HepG2 (cell line): ENCODE measurements at regions of chr3 and their contacts with region 1.

Region 1: DNA sequence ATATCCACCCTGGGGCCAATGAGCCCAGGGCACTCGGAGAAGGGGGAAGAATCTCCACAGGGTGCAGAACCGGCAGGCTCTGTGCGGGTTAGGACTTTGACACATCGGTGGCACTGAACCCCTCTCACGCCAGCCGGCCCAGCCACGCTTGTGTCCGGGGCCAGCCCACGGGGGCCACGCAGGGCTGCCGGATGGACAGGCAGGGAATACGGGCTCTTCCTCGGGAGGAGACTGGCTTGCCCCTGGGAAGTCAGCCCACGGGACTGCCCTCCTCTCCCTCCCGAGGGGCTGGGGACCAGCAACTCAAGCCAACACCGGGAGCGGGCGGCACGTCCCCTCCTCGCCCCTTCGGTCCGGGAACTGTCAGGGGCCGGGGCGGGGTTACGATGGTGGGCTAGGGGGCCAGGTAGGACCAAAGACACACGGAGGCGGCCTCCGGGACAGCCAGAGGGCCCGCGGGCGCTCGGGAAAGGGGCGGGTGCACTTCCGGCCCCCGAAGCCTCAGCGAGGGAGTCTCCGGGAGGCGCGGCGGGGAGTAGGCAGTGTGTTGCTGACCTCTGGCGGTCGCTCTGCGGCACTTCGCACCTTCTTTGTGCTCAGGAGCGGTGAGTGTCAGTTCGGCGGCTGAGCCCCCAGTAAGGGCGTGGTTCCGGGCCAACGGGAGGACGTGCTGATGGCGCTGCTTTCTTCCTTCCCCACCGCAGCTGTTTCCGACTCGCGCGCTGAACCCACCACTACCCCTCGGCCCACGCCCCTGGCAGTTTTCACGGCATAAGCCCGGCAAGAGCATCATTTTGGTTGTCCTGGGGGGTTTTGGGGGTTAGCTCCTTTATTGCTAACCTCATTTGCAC is 5.1 kb upstream of the CYP8B1 start:
- DNase-seq: peak; percentile 66
- ATAC-seq: peak; percentile 96
- H3K4me3 ChIP-seq: peak overlapping the region in 2 of 3 experiments; percentile 34 to 56; a peak in 3 of 6 replicates
- H3K27ac ChIP-seq: no peak overlapping the region
- H3K4me1 ChIP-seq: peaks cover 52% of the 10 kb centered on the region
- H3K27me3 ChIP-seq: no peaks in the 10 kb centered on the region; a peak in 1 of 5 replicates
- CTCF ChIP-seq: peak; percentile 99
- EP300 ChIP-seq: no peak
- POLR2A ChIP-seq: no peak
- RAD21 ChIP-seq: peak; percentile 99

Region 2: DNA sequence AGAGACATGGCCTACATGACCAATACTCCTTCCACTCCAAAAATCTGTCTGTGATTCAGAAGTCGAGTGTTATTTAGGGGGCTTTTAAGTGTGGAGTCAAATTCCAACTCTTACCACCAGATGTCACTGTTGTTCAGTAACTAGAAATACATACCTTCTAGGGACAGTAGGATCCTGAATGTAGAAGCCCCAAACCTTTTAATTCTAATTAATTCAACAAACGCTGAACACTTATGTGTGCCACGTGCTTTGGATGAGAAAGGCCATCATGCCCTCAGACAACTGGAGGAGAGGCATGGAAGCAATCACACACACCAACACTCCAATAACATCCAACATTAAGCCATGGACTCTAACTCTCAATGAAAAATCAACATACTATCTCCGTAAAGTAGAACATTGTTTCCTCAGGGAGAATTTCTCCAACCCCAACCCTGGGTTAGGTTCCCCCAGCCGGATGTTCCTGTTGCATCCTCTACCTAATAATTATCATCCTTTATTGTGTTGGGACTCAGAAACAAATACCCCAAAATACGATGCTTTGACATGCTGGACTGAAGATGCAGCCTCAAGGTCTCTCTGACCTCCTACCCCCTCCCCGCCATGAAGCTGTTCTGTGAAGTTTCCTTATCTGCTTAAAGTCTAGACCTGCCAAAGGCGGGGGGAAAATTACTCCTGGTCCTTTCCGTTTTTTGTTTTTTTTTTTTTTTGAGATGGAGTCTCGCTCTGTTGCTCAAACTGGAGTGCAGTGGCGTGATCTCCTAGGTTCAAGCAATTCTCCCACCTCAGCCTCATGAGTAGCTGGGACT is 99.7 kb before region 1 on chr3:
- CTCF ChIA-PET with region 1: interaction called, 11 read pairs
- POLR2A ChIA-PET with region 1: interaction called, 5 read pairs
- in situ Hi-C with region 1: loop called (anchors 5 kb)
- intact Hi-C with region 1: loop called (anchors 1 kb)
- DNase-seq: peak; percentile 68
- ATAC-seq: peak; percentile 84
- H3K4me3 ChIP-seq: no peak overlapping the region
- H3K27ac ChIP-seq: no peak overlapping the region
- H3K4me1 ChIP-seq: peaks cover 16% of the 10 kb centered on the region
- H3K27me3 ChIP-seq: no peaks in the 10 kb centered on the region
- CTCF ChIP-seq: peak; percentile 78
- EP300 ChIP-seq: no peak
- POLR2A ChIP-seq: no peak
- RAD21 ChIP-seq: peak; percentile 78

Region 3: DNA sequence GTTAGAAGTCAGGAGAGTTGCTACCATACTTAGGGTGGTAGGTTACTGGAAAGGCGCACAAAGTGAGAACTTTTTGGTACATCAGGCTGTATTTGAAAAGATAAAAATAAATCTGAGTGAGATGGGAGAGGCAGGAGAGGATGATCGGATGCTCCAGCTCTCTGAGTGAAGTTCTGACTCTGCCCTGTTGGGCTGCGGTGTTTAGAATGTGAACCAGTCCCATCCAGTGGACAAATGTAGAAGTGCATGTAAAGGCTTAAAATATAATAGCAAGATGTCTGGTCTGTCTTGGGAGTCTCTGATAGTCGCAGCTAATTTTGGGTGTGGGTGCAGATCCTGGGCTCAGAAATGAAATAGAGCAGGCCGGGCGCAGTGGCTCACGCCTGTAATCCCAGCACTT is 41.2 kb before region 1 on chr3:
- CTCF ChIA-PET with region 1: interaction called, 9 read pairs
- POLR2A ChIA-PET with region 1: interaction called, 4 read pairs
- in situ Hi-C with region 1: loop called (anchors 5 kb)
- intact Hi-C with region 1: loop called (anchors 2 kb)
- DNase-seq: peak; percentile 73
- ATAC-seq: peak; percentile 98
- H3K4me3 ChIP-seq: no peak overlapping the region
- H3K27ac ChIP-seq: no peak overlapping the region
- H3K4me1 ChIP-seq: peaks cover 41% of the 10 kb centered on the region
- H3K27me3 ChIP-seq: no peaks in the 10 kb centered on the region
- CTCF ChIP-seq: peak; percentile 70
- EP300 ChIP-seq: no peak
- POLR2A ChIP-seq: no peak
- RAD21 ChIP-seq: peak; percentile 77

Region 4: GRCh38 chr3:42852441-42852840 is 28.4 kb before region 1 on chr3:
- CTCF ChIA-PET with region 1: no interaction called
- POLR2A ChIA-PET with region 1: interaction called, 32 read pairs
- in situ Hi-C with region 1: no loop called
- intact Hi-C with region 1: no loop called
- DNase-seq: no peak
- ATAC-seq: no peak
- H3K4me3 ChIP-seq: no peak overlapping the region
- H3K27ac ChIP-seq: peak overlapping the region; percentile 98
- H3K4me1 ChIP-seq: peaks cover 95% of the 10 kb centered on the region
- H3K27me3 ChIP-seq: no peaks in the 10 kb centered on the region
- CTCF ChIP-seq: no peak
- EP300 ChIP-seq: no peak
- POLR2A ChIP-seq: no peak
- RAD21 ChIP-seq: no peak

Region 5: DNA sequence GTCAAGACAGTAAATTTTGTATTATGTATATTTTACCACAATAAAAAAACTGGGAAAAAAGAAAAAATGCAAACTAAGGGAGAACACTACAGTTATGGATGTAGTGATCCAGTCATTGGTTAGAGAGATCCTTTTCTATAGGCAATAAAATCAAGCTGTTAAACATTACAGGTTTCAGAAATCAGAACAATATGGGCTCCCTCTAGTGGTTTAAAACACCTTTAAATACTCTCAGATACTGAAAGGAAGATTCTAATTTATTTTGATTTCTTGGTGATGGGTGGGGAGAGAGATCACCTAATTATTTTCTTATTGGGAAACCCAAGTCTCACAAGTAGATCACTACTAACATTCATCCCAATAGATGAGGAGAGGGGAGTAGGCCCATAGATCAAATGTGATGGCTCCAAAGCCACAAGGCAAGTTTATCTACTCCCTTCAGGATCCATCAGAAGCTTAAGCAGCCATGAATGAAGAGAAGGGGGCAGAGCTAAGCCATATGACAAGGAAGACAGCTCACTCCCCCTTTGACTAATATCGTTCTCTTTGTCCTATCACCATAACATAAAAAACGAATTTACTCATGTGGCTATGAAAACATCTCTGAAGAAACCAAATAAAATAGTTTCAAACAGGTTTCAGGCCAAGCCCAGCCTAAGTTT is 622.4 kb after region 1 on chr3:
- CTCF ChIA-PET with region 1: no interaction called
- POLR2A ChIA-PET with region 1: no interaction called
- in situ Hi-C with region 1: no loop called
- intact Hi-C with region 1: no loop called
- DNase-seq: peak; percentile 15
- ATAC-seq: no peak; the same call in 2 of the 3 replicates
- H3K4me3 ChIP-seq: no peak overlapping the region
- H3K27ac ChIP-seq: no peak overlapping the region
- H3K4me1 ChIP-seq: no peaks in the 10 kb centered on the region
- H3K27me3 ChIP-seq: no peaks in the 10 kb centered on the region; a peak in 1 of 5 replicates
- CTCF ChIP-seq: peak; percentile 43
- EP300 ChIP-seq: no peak
- POLR2A ChIP-seq: no peak
- RAD21 ChIP-seq: no peak